CD8-positive, alpha-beta T cell (primary cell): ENCODE measurements at regions of chr9 and their contacts with region 1.

Region 1: GRCh38 chr9:105157130-105157583 is 87.3 kb upstream of the SLC44A1 start:
- DNase-seq: peak in 5 of 9 experiments; percentile 1 to 58 (median 41)
- ATAC-seq: peak; percentile 55
- H3K4me3 ChIP-seq: no peak overlapping the region
- H3K4me3 Mint-ChIP-seq: no peak overlapping the region
- H3K27ac ChIP-seq: no peak overlapping the region
- H3K27ac Mint-ChIP-seq: no peak overlapping the region
- H3K4me1 ChIP-seq: peaks cover 5% of the 10 kb centered on the region
- H3K4me1 Mint-ChIP-seq: peaks cover 16% of the 10 kb centered on the region
- H3K27me3 ChIP-seq: peaks cover 0 to 3% of the 10 kb centered on the region in 2 experiments
- H3K27me3 Mint-ChIP-seq: no peaks in the 10 kb centered on the region
- CTCF ChIP-seq: peak; percentile 57

Region 2: DNA sequence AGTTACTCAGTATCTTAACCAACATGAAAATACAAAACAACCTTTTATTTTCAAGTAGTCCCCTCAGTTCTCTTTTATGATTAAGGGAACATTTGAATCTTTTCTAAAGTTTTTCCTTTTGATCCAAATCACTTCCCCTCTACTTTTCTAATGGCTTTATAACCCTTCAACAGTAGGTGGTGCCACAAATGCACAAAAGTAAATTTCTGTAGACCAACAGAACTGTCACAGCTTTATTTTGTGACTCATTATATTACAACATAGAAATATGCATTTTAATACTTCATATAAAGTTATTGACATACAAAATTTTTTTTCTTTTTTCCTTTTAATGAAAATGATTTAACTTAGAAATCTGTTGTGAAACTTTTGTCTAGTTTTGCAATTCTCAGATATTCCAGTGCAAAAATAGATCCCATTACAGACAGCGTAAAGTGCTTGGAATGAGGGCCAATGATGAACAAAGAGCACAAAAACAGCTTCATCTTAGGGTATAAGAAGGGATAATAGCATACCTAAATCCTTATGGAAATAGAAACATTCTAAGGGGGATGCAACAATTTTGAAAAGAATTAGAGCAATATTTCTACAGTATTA is 376.3 kb before region 1 on chr9:
- CTCF ChIA-PET with region 1: no interaction called
- POLR2A ChIA-PET with region 1: no interaction called
- intact Hi-C with region 1: loop called in 1 of 2 experiments (anchors 10 kb)
- DNase-seq: peak in 2 of 9 experiments; percentile 13 to 31
- ATAC-seq: no peak
- H3K4me3 ChIP-seq: no peak overlapping the region
- H3K4me3 Mint-ChIP-seq: no peak overlapping the region
- H3K27ac ChIP-seq: no peak overlapping the region
- H3K27ac Mint-ChIP-seq: no peak overlapping the region
- H3K4me1 ChIP-seq: no peaks in the 10 kb centered on the region
- H3K4me1 Mint-ChIP-seq: no peaks in the 10 kb centered on the region
- H3K27me3 ChIP-seq: no peaks in the 10 kb centered on the region
- H3K27me3 Mint-ChIP-seq: no peaks in the 10 kb centered on the region
- CTCF ChIP-seq: no peak

Region 3: GRCh38 chr9:104863180-104863883 is 293.8 kb before region 1 on chr9:
- CTCF ChIA-PET with region 1: interaction called, 56 read pairs
- POLR2A ChIA-PET with region 1: no interaction called
- intact Hi-C with region 1: loop called in 1 of 2 experiments (anchors 1 kb)
- DNase-seq: peak; percentile 9 to 73 (median 41)
- ATAC-seq: peak; percentile 91
- H3K4me3 ChIP-seq: no peak overlapping the region
- H3K4me3 Mint-ChIP-seq: no peak overlapping the region
- H3K27ac ChIP-seq: no peak overlapping the region
- H3K27ac Mint-ChIP-seq: no peak overlapping the region
- H3K4me1 ChIP-seq: no peaks in the 10 kb centered on the region
- H3K4me1 Mint-ChIP-seq: peaks cover 4% of the 10 kb centered on the region
- H3K27me3 ChIP-seq: no peaks in the 10 kb centered on the region
- H3K27me3 Mint-ChIP-seq: peaks cover 4% of the 10 kb centered on the region
- CTCF ChIP-seq: peak; percentile 82

Region 4: DNA sequence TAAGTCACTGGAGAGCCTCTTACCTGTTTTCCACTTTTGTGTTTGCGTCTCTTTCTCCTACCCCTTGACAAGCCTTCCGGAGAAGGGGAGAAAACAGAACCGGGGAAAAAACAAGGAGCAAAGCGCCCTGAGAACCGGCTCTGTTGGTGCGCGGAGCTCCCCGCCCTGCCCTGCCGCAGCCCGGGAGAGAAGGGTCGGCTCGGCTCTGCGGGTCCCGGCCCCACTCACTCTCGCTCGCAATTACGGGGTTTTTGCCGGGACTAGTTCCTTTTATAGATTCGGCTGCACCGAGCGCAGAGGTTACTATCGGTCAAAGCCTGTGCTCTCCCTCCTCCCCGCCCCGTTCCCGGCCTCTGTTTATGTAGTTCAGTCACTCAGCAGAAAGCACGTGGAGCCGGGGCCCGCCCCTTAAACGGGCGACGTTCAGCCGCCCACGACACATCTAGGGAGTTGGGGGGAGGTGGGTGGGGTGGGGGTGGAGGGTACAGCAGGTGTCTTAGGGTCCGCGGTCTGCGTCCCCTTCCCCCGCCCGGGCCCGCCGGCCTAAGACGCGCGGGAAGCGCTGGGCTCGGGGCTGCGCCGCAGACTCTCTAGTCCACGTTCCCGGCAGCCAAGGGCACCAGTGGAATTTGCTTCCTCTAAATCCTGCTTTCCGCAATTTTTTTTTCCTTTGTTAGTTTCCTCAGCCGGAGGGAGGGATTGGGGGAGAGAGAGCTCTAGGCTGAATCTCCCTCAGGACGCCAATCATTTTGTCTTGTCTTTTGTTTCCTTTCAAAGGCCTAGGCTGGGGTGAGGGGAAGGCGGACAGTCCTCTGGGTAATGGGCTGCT is 229.0 kb before region 1 on chr9 and contains the start of gene ABCA1:
- CTCF ChIA-PET with region 1: no interaction called
- POLR2A ChIA-PET with region 1: no interaction called
- intact Hi-C with region 1: loop called (anchors 1 to 5 kb)
- DNase-seq: peak; percentile 42 to 87 (median 65)
- ATAC-seq: peak; percentile 78
- H3K4me3 ChIP-seq: peak within 1 kb of the TSS; percentile 56 to 71
- H3K4me3 Mint-ChIP-seq: peak within 1 kb of the TSS; percentile 91
- H3K27ac ChIP-seq: no peak within 1 kb of the TSS
- H3K27ac Mint-ChIP-seq: peak within 1 kb of the TSS; percentile 80
- H3K4me1 ChIP-seq: peaks cover 19% of the 10 kb centered on the region
- H3K4me1 Mint-ChIP-seq: peaks cover 15% of the 10 kb centered on the region
- H3K27me3 ChIP-seq: peaks cover 0 to 24% of the 10 kb centered on the region in 2 experiments
- H3K27me3 Mint-ChIP-seq: peaks cover 11% of the 10 kb centered on the region
- CTCF ChIP-seq: no peak
- total RNA-seq, gene ABCA1: 11.2 to 11.4 TPM

Region 5: GRCh38 chr9:105103782-105104181 is 53.4 kb before region 1 on chr9:
- CTCF ChIA-PET with region 1: no interaction called
- POLR2A ChIA-PET with region 1: no interaction called
- intact Hi-C with region 1: loop called in 1 of 2 experiments (anchors 10 kb)
- DNase-seq: no peak
- ATAC-seq: no peak
- H3K4me3 ChIP-seq: no peak overlapping the region
- H3K4me3 Mint-ChIP-seq: no peak overlapping the region
- H3K27ac ChIP-seq: no peak overlapping the region
- H3K27ac Mint-ChIP-seq: no peak overlapping the region
- H3K4me1 ChIP-seq: no peaks in the 10 kb centered on the region
- H3K4me1 Mint-ChIP-seq: no peaks in the 10 kb centered on the region
- H3K27me3 ChIP-seq: no peaks in the 10 kb centered on the region
- H3K27me3 Mint-ChIP-seq: peaks cover 4% of the 10 kb centered on the region
- CTCF ChIP-seq: no peak

Region 6: DNA sequence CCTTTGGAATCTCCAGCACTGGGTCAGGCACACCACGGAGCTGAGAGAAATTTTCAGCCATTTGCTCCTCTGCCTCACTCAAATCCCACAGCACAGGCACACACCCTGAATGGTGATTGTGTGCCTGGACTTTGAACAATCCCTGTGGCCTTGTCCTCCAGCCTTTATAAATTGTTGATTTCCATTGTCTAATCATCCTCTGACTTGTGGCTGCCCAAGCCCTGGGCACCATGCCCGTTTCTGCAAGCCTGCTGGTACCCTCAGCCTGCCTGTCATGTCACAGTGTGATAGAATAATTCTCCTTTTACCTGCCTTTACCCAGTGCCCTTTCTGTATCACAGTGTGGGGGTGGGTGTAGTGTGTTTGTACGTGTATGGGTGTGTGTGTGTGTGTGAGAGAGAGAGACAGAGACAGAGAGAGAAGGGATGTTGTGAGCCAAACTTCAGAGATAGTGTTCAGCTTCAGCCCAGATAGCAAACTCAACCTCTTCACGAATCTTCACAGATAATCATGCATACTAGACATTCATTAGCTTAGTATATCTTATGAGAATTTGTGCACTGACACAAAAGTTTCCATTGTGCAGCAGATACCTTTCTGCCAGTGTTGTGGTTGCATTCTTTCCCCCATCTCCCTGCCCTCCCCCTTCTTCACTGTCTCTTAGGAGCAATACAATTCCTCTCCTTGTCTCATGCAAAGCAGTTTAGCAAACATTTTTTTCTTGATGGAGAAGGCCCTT is 59.5 kb after region 1 on chr9:
- CTCF ChIA-PET with region 1: no interaction called
- POLR2A ChIA-PET with region 1: no interaction called
- intact Hi-C with region 1: no loop called
- DNase-seq: no peak
- ATAC-seq: no peak
- H3K4me3 ChIP-seq: no peak overlapping the region
- H3K4me3 Mint-ChIP-seq: no peak overlapping the region
- H3K27ac ChIP-seq: no peak overlapping the region
- H3K27ac Mint-ChIP-seq: no peak overlapping the region
- H3K4me1 ChIP-seq: no peaks in the 10 kb centered on the region
- H3K4me1 Mint-ChIP-seq: no peaks in the 10 kb centered on the region
- H3K27me3 ChIP-seq: no peaks in the 10 kb centered on the region
- H3K27me3 Mint-ChIP-seq: peaks cover 2% of the 10 kb centered on the region
- CTCF ChIP-seq: no peak